Panc1 (cell line): ENCODE measurements at regions of chr15 and their contacts with region 1.

Region 1: GRCh38 chr15:41323611-41324010 is 8.8 kb downstream of the OIP5 start:
- DNase-seq: no peak
- ATAC-seq: no peak
- H3K4me3 ChIP-seq: no peak overlapping the region
- H3K27ac ChIP-seq: no peak overlapping the region
- H3K4me1 ChIP-seq: no peaks in the 10 kb centered on the region
- H3K27me3 ChIP-seq: no peaks in the 10 kb centered on the region
- CTCF ChIP-seq: no peak

Region 2: DNA sequence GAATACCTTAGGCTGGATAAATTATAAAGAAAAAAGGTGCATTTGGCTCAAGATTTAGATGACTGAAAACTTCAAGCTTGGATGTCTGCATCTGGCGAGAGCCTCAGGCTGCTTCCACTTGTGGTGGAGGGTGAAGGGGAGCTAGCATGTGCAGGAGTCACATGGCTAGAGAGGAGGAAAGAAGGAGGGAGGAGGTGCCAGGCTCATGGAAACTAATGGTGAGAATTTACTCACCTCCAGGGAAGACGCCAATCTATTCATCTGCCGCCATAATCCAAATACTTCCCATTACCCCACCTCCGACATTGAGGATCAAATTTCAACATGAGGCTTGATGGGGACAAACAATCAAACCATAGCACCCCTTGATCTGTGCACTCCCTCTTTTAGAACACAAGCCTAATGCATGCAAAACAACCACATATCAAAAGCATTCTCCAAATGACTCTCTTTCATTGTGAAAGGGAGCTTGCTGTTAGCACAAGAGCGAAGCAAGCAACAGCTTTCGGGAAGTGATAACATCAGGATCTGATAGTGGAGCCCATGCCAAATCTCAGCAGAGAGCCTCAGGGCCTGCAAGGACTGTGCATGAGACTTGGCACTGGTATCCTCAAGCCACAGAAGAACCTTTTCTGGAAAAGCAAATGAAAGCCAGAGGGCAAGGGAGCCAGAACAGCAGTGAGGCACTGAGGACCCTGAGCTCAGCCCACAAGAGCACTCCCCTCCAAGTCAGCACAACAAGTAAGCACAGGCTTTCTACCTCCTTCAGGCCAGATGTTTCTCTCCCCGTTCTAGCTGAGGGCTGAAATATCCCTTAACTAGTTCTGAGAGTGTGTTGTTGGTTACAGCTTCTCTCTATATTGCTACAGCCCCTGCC is 1792.9 kb before region 1 on chr15:
- CTCF ChIA-PET with region 1: no interaction called
- POLR2A ChIA-PET with region 1: no interaction called
- in situ Hi-C with region 1: no loop called
- intact Hi-C with region 1: no loop called
- DNase-seq: no peak
- ATAC-seq: no peak; the same call in 1 of the 2 replicates
- H3K4me3 ChIP-seq: no peak overlapping the region
- H3K27ac ChIP-seq: no peak overlapping the region
- H3K4me1 ChIP-seq: no peaks in the 10 kb centered on the region
- H3K27me3 ChIP-seq: no peaks in the 10 kb centered on the region
- CTCF ChIP-seq: no peak

Region 3: DNA sequence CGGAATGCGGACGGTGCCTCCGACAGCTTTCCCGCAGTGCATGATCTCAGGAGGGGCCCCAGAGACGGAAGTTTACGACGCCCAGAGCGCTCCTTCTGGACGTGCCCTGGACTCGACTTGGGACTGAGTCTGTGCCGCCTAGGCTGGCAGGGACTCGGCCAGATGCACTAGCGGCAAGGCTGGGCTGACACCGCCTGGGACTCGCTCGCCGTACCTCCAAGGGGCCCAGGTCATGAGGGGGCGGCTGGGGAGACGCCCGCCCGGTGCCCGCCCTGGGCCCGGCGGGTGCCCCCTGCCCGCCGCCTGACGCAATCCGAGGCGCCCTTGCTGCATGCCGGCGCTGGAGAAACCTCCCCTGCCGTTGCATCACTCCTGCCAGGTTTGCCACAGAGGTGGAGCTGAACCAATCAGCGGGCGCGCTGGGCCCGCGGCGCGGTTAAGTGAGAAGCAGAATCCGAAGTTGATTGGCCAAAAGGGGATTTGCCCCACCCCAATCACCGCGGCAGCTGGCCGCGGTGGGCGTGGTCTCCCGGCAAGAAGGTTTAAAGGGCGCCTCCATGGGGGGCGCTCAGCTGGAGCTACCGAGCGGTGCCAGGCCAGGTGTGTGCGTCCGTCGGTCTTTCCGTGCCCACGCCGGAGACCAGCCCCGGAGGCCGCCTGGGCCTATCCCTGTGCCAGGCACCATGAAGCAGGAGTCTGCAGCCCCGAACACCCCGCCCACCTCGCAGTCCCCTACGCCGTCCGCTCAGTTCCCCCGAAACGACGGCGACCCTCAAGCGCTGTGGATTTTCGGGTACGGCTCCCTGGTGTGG is 370.5 kb before region 1 on chr15 and contains the start of gene CHAC1:
- CTCF ChIA-PET with region 1: no interaction called
- POLR2A ChIA-PET with region 1: no interaction called
- in situ Hi-C with region 1: no loop called
- intact Hi-C with region 1: no loop called
- DNase-seq: peak; percentile 92
- ATAC-seq: peak; percentile 97
- H3K4me3 ChIP-seq: peak within 1 kb of the TSS; percentile 87 to 98
- H3K27ac ChIP-seq: peak within 1 kb of the TSS; percentile 92
- H3K4me1 ChIP-seq: peaks cover 10% of the 10 kb centered on the region
- H3K27me3 ChIP-seq: no peaks in the 10 kb centered on the region
- CTCF ChIP-seq: no peak
- total RNA-seq, gene CHAC1: 15.5 TPM

Region 4: DNA sequence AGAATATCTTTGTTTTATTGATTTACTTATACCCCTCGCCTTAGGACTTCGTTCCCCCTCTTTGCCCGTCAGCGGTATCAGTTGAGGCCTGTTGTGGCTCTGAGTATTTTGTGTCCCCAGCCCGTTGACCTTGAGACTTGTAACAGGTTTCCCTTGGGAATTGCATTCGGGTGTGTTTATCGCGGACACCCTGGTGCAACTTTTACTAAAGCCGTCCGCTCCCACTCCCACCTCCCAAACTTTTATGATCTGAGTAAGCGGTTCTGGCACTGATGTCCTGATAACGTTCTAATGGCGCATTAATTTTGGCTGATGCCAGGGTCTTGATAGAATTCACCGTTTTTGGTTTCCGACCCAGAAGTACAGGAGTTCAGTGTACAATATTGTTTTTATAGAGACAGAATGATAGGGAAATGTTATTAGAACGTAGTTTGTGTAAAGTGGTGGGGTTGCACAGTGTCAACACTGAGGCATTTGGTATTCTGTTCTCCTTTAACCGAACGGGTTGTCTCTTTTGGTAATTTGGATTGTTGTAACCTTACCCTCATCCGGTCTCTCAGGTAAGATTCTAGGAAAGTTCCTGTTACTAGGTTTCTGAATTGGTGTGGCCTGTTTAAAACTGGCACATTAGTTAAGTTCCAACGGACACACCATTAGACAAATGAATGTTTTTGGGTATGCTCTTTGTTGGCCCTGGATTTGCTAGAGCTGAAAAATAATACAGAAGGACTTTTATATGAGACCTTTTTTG is 39.0 kb before region 1 on chr15:
- CTCF ChIA-PET with region 1: no interaction called
- POLR2A ChIA-PET with region 1: interaction called, 10 read pairs
- in situ Hi-C with region 1: no loop called
- intact Hi-C with region 1: no loop called
- DNase-seq: no peak
- ATAC-seq: peak; percentile 1; the same call in 1 of the 2 replicates
- H3K4me3 ChIP-seq: peak overlapping the region; percentile 93 to 95
- H3K27ac ChIP-seq: peak overlapping the region; percentile 98
- H3K4me1 ChIP-seq: peaks cover 2% of the 10 kb centered on the region
- H3K27me3 ChIP-seq: no peaks in the 10 kb centered on the region
- CTCF ChIP-seq: no peak

Region 5: DNA sequence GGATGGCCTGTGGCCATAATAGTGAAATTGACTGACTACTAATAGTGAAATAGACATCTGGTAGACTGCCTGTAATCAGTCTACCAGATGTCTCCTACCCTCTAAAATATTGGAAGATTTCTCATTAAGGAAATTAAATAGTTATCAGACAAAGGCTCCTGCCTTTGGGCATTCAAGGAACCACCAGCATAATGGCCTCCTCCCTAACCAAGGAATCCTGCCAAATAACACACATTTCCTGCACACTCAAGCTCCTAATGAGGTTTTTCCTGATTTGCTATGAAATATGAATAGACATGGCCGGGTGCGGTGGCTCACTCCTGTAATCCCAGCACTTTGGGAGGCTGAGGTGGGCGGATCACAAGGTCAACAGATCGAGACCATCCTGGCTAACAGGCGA is 23.6 kb after region 1 on chr15:
- CTCF ChIA-PET with region 1: no interaction called
- POLR2A ChIA-PET with region 1: no interaction called
- in situ Hi-C with region 1: no loop called
- intact Hi-C with region 1: no loop called
- DNase-seq: no peak
- ATAC-seq: no peak
- H3K4me3 ChIP-seq: no peak overlapping the region
- H3K27ac ChIP-seq: no peak overlapping the region
- H3K4me1 ChIP-seq: no peaks in the 10 kb centered on the region
- H3K27me3 ChIP-seq: no peaks in the 10 kb centered on the region
- CTCF ChIP-seq: no peak

Region 6: DNA sequence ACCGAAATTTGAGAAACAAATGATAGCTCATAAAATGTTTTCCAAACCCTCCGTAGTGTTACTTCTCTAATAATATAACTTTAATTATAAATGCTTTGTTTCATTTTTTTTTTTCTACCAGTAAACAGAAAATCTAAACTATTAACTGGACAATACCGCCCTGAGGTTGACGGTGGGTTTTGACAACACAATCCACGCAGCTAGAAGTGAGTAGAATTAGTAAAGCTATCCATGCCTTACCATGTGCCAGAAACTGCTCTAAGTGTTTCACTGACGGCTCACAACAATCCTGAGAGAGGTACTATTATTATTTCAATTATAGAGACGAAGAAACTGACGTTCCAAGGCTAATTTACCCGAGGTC is 78.3 kb after region 1 on chr15:
- CTCF ChIA-PET with region 1: no interaction called
- POLR2A ChIA-PET with region 1: interaction called, 10 read pairs
- in situ Hi-C with region 1: no loop called
- intact Hi-C with region 1: no loop called
- DNase-seq: no peak
- ATAC-seq: no peak; the same call in 1 of the 2 replicates
- H3K4me3 ChIP-seq: peak overlapping the region; percentile 79 to 86
- H3K27ac ChIP-seq: peak overlapping the region; percentile 92
- H3K4me1 ChIP-seq: 0 out of 2 replicates have a peak, but pooled peaks cover 4% of the 10 kb centered on the region
- H3K27me3 ChIP-seq: no peaks in the 10 kb centered on the region
- CTCF ChIP-seq: no peak

Region 7: GRCh38 chr15:41407341-41407740 is 83.7 kb after region 1 on chr15:
- CTCF ChIA-PET with region 1: no interaction called
- POLR2A ChIA-PET with region 1: interaction called, 12 read pairs
- in situ Hi-C with region 1: no loop called
- intact Hi-C with region 1: no loop called
- DNase-seq: no peak
- ATAC-seq: no peak
- H3K4me3 ChIP-seq: no peak overlapping the region
- H3K27ac ChIP-seq: no peak overlapping the region
- H3K4me1 ChIP-seq: 0 out of 2 replicates have a peak, but pooled peaks cover 4% of the 10 kb centered on the region
- H3K27me3 ChIP-seq: no peaks in the 10 kb centered on the region
- CTCF ChIP-seq: no peak